IMR-90 (cell line): ENCODE measurements at regions of chr4 and their contacts with region 1.

Region 1: DNA sequence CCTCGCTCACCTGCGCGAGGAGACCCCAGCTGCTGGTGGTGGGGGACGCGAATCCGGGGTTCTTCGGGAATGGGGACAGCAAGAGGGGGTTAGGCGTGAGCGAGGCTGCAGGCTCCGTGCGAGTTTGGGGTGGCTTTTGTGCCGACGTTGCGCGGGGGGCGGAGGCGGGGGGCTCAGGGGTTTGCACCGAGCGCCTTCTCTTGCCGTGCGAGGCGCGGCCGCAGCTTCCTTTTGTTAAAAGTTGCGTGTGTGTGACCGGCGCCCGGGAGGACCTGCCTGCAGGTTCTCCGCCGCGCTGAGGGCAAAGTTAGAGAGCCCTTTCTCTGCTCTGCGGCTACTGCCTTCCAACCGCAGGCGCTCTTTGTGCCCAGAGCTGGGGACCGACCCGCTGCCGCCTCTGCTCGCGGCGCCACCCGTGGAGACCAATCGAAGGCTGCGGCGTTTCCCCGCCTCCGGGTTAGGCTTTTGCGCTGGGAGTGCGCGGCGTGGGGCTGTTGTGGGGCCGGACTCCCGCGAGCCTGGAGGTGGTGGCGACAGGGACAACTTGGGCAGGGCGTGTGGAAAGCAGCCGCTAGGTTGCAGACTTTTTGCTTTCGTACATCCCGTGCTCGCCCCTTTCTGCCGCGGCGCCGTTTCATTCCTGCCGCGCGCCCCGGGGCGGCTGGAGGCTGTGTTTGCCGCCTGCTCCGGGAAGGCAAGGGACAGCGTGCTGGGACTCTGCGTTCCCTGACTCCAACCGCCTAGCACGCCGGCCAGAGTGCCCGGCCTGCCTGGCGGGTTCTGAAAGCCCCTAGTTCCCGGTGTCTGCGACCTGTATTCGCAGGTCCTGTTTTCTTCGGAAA is 716 bp downstream of the KIT start:
- DNase-seq: peak; percentile 36
- ATAC-seq: peak; percentile 60
- H3K4me3 ChIP-seq: peak overlapping the region; percentile 74
- H3K27ac ChIP-seq: peak overlapping the region; percentile 36; the same call in 1 of the 2 replicates
- H3K4me1 ChIP-seq: peaks cover 16% of the 10 kb centered on the region
- H3K27me3 ChIP-seq: peaks cover 22% of the 10 kb centered on the region
- CTCF ChIP-seq: 0 out of 2 replicates have a peak, but pooled peaks have one; percentile 15
- POLR2A ChIP-seq: no peak
- RAD21 ChIP-seq: no peak

Region 2: DNA sequence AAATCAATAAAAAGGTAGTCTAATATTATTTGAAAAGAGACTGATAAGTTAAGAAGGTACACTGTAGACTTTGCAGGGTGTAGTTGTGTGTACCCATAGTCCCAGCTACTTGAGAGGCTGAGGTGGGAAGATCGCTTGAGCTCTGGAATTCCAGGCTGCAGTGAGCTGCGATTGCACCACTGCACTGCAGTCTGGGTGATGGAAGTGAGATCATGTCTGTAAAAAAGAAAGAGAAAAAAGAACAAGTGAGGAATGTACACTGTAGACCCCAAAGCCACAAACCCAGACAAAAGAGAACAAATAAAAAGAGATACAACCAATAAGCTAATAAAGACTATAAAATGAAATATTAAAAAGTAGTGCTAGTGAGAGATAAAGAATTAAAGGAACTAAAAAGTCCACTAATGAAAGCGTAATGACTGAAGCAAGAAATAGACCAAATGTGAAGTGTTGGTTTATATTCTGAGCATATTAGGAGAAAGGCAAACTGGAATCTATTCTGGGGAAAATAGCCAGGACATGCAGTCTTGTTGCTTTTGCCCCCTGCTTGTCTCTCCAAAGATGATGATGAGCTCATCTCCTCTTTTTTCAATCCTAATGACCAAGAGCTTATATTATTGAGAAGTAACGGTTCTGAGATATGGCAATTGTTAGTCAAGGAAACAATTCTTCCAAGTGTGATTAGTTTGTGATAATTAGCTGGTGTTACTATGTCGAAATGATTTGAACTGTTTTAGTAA is 539.5 kb before region 1 on chr4:
- CTCF ChIA-PET with region 1: no interaction called
- POLR2A ChIA-PET with region 1: no interaction called
- dilution Hi-C with region 1: no loop called
- in situ Hi-C with region 1: no loop called
- intact Hi-C with region 1: no loop called
- DNase-seq: peak; percentile 32
- ATAC-seq: peak; percentile 63
- H3K4me3 ChIP-seq: no peak overlapping the region
- H3K27ac ChIP-seq: no peak overlapping the region
- H3K4me1 ChIP-seq: no peaks in the 10 kb centered on the region
- H3K27me3 ChIP-seq: no peaks in the 10 kb centered on the region
- CTCF ChIP-seq: no peak
- POLR2A ChIP-seq: no peak
- RAD21 ChIP-seq: no peak

Region 3: DNA sequence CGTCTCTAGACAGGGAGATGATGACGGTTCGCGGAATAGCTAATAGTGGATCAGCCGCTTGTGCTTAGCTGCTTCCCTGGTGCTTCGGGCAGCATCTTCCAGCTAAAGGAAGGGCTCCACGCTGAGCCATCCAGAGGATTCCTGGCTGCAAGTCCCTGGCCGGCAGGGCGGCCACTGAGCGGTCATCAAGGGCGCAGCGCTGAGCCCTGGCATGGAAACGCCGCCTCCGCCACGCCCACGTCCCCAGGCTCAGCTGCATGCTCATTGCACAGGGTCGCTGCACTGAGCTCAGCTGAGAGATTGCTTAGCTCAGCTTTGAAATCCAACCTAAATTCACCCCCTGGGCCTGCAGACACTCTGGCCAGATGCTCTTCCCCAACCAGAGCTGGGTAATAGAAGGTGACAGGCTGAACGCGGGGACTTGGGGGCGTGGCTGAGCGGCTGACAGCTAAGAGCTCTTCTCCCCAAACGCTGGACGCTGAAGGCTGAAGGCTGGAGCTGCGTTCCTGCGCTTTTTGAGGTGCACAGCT is 118.9 kb before region 1 on chr4:
- CTCF ChIA-PET with region 1: interaction called, 3 read pairs
- POLR2A ChIA-PET with region 1: no interaction called
- dilution Hi-C with region 1: no loop called
- in situ Hi-C with region 1: no loop called
- intact Hi-C with region 1: loop called (anchors 2 kb)
- DNase-seq: peak; percentile 46
- ATAC-seq: peak; percentile 79
- H3K4me3 ChIP-seq: peak overlapping the region; percentile 42
- H3K27ac ChIP-seq: no peak overlapping the region
- H3K4me1 ChIP-seq: peaks cover 21% of the 10 kb centered on the region
- H3K27me3 ChIP-seq: no peaks in the 10 kb centered on the region
- CTCF ChIP-seq: no peak
- POLR2A ChIP-seq: no peak
- RAD21 ChIP-seq: no peak

Region 4: DNA sequence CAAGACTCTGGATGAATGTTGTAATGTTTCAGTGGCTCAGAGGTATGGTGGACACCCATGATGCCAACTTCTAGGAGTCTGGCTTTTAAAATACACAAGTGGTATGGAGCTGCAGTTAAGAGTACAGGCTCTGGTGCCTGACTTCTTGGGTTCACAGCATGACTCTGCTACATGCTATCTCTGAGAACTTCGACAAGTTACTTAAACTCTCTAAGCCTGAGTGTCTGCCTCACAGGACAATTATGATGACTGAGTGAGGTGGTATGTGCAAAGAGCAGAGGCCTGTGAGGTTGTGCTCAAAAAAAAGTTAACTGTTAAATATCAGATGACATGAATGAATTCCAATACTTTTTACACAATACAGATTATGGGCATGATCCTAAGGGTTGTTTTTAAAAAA is 596.7 kb after region 1 on chr4:
- CTCF ChIA-PET with region 1: no interaction called
- POLR2A ChIA-PET with region 1: no interaction called
- dilution Hi-C with region 1: no loop called
- in situ Hi-C with region 1: no loop called
- intact Hi-C with region 1: no loop called
- DNase-seq: peak; percentile 42
- ATAC-seq: peak; percentile 84
- H3K4me3 ChIP-seq: no peak overlapping the region
- H3K27ac ChIP-seq: no peak overlapping the region
- H3K4me1 ChIP-seq: 0 out of 2 replicates have a peak, but pooled peaks cover 2% of the 10 kb centered on the region
- H3K27me3 ChIP-seq: peaks cover 2% of the 10 kb centered on the region; the same call in 1 of the 2 replicates
- CTCF ChIP-seq: no peak
- POLR2A ChIP-seq: no peak
- RAD21 ChIP-seq: no peak